ENCODE measurements at regions of chr5 and their contacts with region 1.

Region 1: DNA sequence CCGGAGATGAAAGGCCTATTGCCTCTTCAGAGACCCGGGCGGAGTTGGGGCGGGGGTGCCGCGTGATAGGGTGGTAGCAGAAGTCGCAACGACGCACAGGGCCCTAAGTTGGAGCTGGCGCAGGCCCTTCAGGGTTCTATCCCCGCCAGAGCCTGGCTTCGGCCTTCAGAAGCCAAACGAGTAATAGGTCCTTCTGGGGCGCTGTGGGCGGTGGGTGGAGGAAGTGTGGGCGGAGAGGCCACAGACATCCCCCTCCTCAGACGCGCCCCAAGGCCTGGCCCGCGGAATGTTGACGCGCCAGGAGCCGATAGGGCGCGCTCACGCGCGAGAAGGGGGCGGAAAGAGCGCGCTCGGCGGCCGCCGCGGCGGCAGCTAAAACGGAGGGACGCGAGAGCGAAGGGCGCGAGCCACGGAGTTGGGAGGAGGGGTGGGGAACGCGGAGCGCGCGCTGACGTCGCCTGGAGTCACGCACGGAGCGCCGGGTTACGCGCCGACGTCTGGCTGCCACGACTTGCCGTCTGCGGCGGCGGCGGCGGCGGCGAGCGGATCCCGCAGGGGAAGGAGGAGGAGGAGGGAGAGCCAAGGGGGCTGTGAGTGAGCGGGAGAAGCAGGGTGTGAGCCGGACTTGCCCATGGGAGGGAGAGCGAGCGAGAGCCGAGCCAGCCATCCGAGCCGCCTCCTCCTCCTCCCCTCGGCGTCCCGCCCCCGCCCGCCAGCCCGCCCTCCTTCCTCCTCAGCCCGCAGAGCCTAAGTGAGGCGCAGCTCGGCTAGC is 6.4 kb upstream of the PURA start:
- DNase-seq: peak; percentile 96
- ATAC-seq: peak; percentile 90
- H3K4me3 Mint-ChIP-seq: peak overlapping the region; percentile 99
- H3K27ac Mint-ChIP-seq: peak overlapping the region; percentile 95
- H3K4me1 Mint-ChIP-seq: peaks cover 43% of the 10 kb centered on the region
- H3K27me3 Mint-ChIP-seq: peaks cover 3% of the 10 kb centered on the region

Region 2: GRCh38 chr5:139725073-139725830 is 382.2 kb before region 1 on chr5:
- CTCF ChIA-PET with region 1: no interaction called
- POLR2A ChIA-PET with region 1: no interaction called
- intact Hi-C with region 1: no loop called
- DNase-seq: no peak
- ATAC-seq: no peak
- H3K4me3 Mint-ChIP-seq: no peak overlapping the region
- H3K27ac Mint-ChIP-seq: no peak overlapping the region
- H3K4me1 Mint-ChIP-seq: no peaks in the 10 kb centered on the region
- H3K27me3 Mint-ChIP-seq: no peaks in the 10 kb centered on the region

Region 3: DNA sequence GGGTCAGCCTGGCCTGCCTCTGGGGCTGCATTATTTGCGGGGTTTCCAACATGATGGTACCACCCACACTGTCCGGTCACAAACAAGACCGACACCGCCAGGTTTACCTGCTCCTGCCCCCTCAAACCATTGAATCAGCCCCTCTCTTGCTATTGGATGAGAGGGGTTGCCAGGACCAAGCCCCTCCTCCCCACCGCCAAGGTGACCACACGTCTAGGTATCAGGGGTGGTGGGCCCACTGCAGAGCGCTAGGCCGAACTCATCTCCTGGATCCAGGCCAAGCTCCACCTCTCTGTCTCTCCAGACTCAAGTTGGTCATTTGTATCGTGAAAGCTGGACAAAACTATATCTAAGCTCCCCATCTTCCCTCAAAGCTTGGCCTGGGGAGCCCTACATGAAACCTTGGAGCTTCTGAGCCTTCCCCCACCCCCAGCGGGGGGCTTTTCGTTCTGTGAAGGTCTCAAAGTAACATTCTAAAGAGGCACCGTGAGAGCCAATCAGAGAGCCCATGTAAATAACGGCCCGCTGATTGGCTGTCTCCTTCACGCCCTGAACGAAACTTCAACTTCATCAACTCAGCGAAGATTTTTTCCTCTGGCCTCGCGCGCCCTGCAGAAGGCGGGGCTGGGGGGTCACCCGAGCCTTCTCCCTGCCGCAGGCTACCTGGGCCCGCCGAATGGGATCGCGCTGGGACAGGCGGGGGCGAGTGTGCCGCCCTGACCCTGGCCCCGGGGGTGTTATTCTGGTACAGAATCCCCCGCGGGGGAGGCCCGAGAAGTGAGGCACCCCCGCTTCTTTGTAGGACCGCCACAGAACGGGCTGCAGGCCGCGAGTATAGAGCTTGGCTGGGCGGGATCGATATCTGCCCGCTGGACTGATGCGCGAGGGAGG is 361.5 kb before region 1 on chr5:
- CTCF ChIA-PET with region 1: no interaction called
- POLR2A ChIA-PET with region 1: no interaction called
- intact Hi-C with region 1: loop called in 1 of 2 experiments (anchors 5 kb)
- DNase-seq: peak; percentile 70
- ATAC-seq: peak; percentile 27
- H3K4me3 Mint-ChIP-seq: peak overlapping the region; percentile 60
- H3K27ac Mint-ChIP-seq: no peak overlapping the region
- H3K4me1 Mint-ChIP-seq: peaks cover 29% of the 10 kb centered on the region
- H3K27me3 Mint-ChIP-seq: peaks cover 16% of the 10 kb centered on the region

Region 4: GRCh38 chr5:139844472-139845145 is 262.9 kb before region 1 on chr5:
- CTCF ChIA-PET with region 1: no interaction called
- POLR2A ChIA-PET with region 1: no interaction called
- intact Hi-C with region 1: loop called in 1 of 2 experiments (anchors 1 kb)
- DNase-seq: peak; percentile 88
- ATAC-seq: peak; percentile 47
- H3K4me3 Mint-ChIP-seq: no peak overlapping the region
- H3K27ac Mint-ChIP-seq: no peak overlapping the region
- H3K4me1 Mint-ChIP-seq: peaks cover 7% of the 10 kb centered on the region
- H3K27me3 Mint-ChIP-seq: peaks cover 24% of the 10 kb centered on the region

Region 5: DNA sequence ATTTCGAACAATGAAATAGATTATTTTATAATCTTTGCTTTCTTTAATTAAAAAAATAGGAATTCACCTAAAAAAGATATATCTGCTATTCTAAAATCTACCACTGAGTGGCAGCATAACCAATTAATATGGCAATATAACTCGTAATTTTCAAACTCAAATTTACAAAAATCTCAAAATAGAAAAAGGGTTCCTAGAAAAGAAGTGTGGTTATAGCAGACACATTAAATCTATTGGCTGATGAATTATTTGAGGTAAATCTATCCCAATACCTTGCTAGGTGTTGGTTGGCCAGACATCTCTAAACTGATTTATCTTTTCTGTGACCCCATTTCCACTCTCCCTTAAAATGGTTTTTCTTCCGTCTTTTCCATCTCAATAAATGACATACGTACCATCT is 34.2 kb before region 1 on chr5:
- CTCF ChIA-PET with region 1: interaction called, 9 read pairs
- POLR2A ChIA-PET with region 1: no interaction called
- intact Hi-C with region 1: loop called in 1 of 2 experiments (anchors 5 kb)
- DNase-seq: no peak
- ATAC-seq: no peak
- H3K4me3 Mint-ChIP-seq: no peak overlapping the region
- H3K27ac Mint-ChIP-seq: no peak overlapping the region
- H3K4me1 Mint-ChIP-seq: no peaks in the 10 kb centered on the region
- H3K27me3 Mint-ChIP-seq: peaks cover 18% of the 10 kb centered on the region

Region 6: DNA sequence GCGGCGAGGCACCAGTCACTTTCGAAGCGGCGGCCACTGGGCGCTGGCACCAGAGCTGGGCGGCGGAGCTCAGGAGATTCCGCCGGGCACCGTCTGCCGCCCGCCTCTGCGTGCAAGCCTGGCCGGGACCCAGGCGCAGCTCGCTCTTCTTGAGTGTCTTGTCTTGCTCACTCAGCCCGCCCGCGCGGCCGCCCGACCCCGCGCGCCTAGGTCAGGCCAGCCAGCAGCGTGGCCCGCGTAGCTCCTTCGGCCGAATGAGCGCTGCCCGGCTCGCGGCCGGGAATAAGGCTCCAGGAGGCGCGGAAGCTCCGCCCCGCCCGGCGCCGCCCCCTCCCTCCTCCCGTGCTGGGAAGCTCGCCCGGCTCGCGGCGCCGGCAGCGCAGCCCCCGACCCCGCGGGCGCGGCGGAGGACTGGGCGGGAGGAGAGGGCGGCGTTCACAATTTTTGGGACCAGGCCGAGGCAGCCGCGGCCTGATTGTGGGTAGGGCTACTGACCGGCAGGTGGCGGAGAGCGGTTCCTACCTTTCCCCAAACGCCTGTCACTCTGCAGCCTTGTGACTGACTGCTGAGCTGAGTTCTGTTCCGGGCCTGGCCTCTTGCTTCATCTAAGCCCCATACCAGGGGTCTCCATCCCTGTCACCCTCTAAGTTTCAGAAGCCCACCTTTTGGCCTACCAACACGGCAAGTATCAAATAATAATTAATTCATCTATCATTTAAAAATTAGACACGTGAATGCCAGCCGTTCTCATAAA is 239.0 kb after region 1 on chr5 and contains the start of gene HBEGF:
- CTCF ChIA-PET with region 1: interaction called, 3 read pairs
- POLR2A ChIA-PET with region 1: no interaction called
- intact Hi-C with region 1: loop called in 1 of 2 experiments (anchors 5 kb)
- DNase-seq: peak; percentile 74
- ATAC-seq: peak; percentile 46
- H3K4me3 Mint-ChIP-seq: peak within 1 kb of the TSS; percentile 80
- H3K27ac Mint-ChIP-seq: no peak within 1 kb of the TSS
- H3K4me1 Mint-ChIP-seq: peaks cover 44% of the 10 kb centered on the region
- H3K27me3 Mint-ChIP-seq: peaks cover 2% of the 10 kb centered on the region
- total RNA-seq, gene HBEGF: 11.8 to 12.5 TPM

Measured in activated CD4-positive, alpha-beta T cell treated with anti-CD3 and anti-CD28 coated beads for 36 hours (primary cell).